ENCODE measurements at regions of chr11 and their contacts with region 1.

Region 1: GRCh38 chr11:128859563-128860441 is 7.3 kb downstream of the KCNJ1 start:
- DNase-seq: peak; percentile 84
- ATAC-seq: peak; percentile 90
- H3K4me3 Mint-ChIP-seq: no peak overlapping the region
- H3K27ac Mint-ChIP-seq: no peak overlapping the region
- H3K4me1 Mint-ChIP-seq: peaks cover 6% of the 10 kb centered on the region
- H3K27me3 Mint-ChIP-seq: peaks cover 11% of the 10 kb centered on the region

Region 2: GRCh38 chr11:128848815-128849455 is 10.9 kb before region 1 on chr11:
- CTCF ChIA-PET with region 1: interaction called, 32 read pairs
- DNase-seq: peak; percentile 77
- ATAC-seq: peak; percentile 81
- H3K4me3 Mint-ChIP-seq: no peak overlapping the region
- H3K27ac Mint-ChIP-seq: no peak overlapping the region
- H3K4me1 Mint-ChIP-seq: peaks cover 25% of the 10 kb centered on the region
- H3K27me3 Mint-ChIP-seq: no peaks in the 10 kb centered on the region